Naive thymus-derived CD4-positive, alpha-beta T cell (primary cell): ENCODE measurements at regions of chr1 and their contacts with region 1.

Region 1: GRCh38 chr1:65866439-65866838 is 73.7 kb downstream of the PDE4B start:
- DNase-seq: no peak
- ATAC-seq: no peak
- H3K4me3 ChIP-seq: no peak overlapping the region
- H3K4me3 Mint-ChIP-seq: no peak overlapping the region
- H3K27ac ChIP-seq: no peak overlapping the region
- H3K27ac Mint-ChIP-seq: no peak overlapping the region
- H3K4me1 ChIP-seq: no peaks in the 10 kb centered on the region
- H3K4me1 Mint-ChIP-seq: peaks cover 0 to 10% (median 0%) of the 10 kb centered on the region in 7 donors
- H3K27me3 ChIP-seq: no peaks in the 10 kb centered on the region
- H3K27me3 Mint-ChIP-seq: peaks cover 13 to 30% (median 24%) of the 10 kb centered on the region in 5 donors

Region 2: GRCh38 chr1:65812065-65812464 is 54.4 kb before region 1 on chr1:
- CTCF ChIA-PET with region 1: no interaction called
- POLR2A ChIA-PET with region 1: no interaction called
- intact Hi-C with region 1: loop called in 1 of 2 experiments (anchors 1 kb)
- DNase-seq: peak in 1 of 9 donors; percentile 67
- ATAC-seq: peak; percentile 94
- H3K4me3 ChIP-seq: no peak overlapping the region
- H3K4me3 Mint-ChIP-seq: peak overlapping the region in 1 of 10 donors; percentile 3
- H3K27ac ChIP-seq: no peak overlapping the region
- H3K27ac Mint-ChIP-seq: peak overlapping the region in 1 of 9 donors; percentile 67
- H3K4me1 ChIP-seq: no peaks in the 10 kb centered on the region
- H3K4me1 Mint-ChIP-seq: peaks cover 0 to 26% (median 0%) of the 10 kb centered on the region in 7 donors
- H3K27me3 ChIP-seq: no peaks in the 10 kb centered on the region
- H3K27me3 Mint-ChIP-seq: peaks cover 18 to 24% (median 19%) of the 10 kb centered on the region in 5 donors

Region 3: DNA sequence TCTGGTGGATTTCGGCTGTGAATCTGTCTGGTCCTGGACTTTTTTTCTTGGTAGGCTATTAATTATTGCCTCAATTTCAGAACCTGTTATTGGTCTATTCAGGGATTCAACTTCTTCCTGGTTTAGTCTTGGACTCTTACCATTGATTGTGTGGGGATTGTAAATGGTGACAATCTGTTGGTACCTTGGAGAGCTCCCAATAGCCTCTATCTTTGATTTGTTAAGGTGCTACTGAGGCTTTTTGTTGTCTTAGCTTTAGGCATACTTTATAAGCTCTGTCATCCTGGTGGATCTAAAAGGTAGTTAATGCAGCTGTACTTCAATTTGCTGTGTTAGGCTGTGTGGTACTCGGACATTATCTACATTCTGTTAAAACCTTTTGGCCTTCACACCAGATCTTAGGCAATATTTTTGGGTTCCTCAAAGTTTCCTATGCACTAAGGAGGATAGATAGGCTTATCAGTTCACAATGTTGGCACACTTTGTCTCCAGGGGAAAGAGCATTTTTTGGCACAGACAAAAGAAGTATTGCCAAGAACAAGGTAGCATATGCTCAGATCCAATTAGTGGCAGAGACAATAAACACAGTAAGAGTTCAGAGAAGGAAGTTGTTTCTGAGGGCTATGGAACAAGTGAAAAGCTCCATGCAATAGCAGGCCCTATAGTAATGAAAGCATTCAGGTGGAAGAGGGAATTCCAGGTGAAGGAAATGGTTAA is 156.6 kb after region 1 on chr1:
- CTCF ChIA-PET with region 1: no interaction called
- POLR2A ChIA-PET with region 1: no interaction called
- intact Hi-C with region 1: no loop called
- DNase-seq: no peak
- ATAC-seq: no peak
- H3K4me3 ChIP-seq: no peak overlapping the region
- H3K4me3 Mint-ChIP-seq: no peak overlapping the region
- H3K27ac ChIP-seq: no peak overlapping the region
- H3K27ac Mint-ChIP-seq: no peak overlapping the region
- H3K4me1 ChIP-seq: no peaks in the 10 kb centered on the region
- H3K4me1 Mint-ChIP-seq: no peaks in the 10 kb centered on the region
- H3K27me3 ChIP-seq: no peaks in the 10 kb centered on the region
- H3K27me3 Mint-ChIP-seq: peaks cover 0 to 34% (median 10%) of the 10 kb centered on the region in 5 donors